ENCODE measurements at regions of chr2 and their contacts with region 1.

Region 1: GRCh38 chr2:136057023-136057801 is 60.7 kb downstream of the CXCR4 start:
- DNase-seq: peak; percentile 65
- H3K4me3 Mint-ChIP-seq: peak overlapping the region; percentile 43
- H3K27ac Mint-ChIP-seq: peak overlapping the region; percentile 90
- H3K4me1 Mint-ChIP-seq: peaks cover 87% of the 10 kb centered on the region
- H3K27me3 Mint-ChIP-seq: no peaks in the 10 kb centered on the region

Region 2: GRCh38 chr2:135800513-135801460 is 256.4 kb before region 1 on chr2:
- intact Hi-C with region 1: no loop called
- DNase-seq: no peak
- H3K4me3 Mint-ChIP-seq: no peak overlapping the region
- H3K27ac Mint-ChIP-seq: no peak overlapping the region
- H3K4me1 Mint-ChIP-seq: peaks cover 23% of the 10 kb centered on the region
- H3K27me3 Mint-ChIP-seq: no peaks in the 10 kb centered on the region

Region 3: DNA sequence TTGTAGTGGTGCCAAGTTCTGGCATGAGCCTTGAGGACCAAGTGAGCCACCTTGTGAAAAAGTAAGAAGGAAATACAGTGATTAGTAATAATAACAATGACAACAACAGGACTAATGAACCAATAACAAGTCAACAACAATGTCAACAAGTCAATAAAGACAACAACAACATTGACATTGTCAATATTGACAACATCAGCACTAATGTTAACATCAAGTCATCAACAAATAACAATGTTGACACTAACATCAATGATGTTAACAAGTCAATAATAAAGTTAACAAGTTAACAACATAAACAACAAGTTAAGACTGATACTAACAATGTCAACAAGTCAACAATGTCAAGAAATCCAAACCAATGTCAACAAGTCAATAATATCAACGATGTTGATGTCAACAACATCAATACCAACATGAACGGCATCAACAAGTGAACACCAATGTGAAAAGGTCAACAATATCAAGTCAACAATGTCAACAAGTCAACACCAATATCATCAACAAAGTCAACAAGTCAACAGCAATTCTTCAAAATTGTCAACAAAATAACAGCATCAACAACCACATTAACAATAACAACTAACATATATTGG is 244.2 kb before region 1 on chr2:
- intact Hi-C with region 1: loop called (anchors 2 kb)
- DNase-seq: no peak
- H3K4me3 Mint-ChIP-seq: no peak overlapping the region
- H3K27ac Mint-ChIP-seq: peak overlapping the region; percentile 13
- H3K4me1 Mint-ChIP-seq: peaks cover 20% of the 10 kb centered on the region
- H3K27me3 Mint-ChIP-seq: no peaks in the 10 kb centered on the region

Region 4: DNA sequence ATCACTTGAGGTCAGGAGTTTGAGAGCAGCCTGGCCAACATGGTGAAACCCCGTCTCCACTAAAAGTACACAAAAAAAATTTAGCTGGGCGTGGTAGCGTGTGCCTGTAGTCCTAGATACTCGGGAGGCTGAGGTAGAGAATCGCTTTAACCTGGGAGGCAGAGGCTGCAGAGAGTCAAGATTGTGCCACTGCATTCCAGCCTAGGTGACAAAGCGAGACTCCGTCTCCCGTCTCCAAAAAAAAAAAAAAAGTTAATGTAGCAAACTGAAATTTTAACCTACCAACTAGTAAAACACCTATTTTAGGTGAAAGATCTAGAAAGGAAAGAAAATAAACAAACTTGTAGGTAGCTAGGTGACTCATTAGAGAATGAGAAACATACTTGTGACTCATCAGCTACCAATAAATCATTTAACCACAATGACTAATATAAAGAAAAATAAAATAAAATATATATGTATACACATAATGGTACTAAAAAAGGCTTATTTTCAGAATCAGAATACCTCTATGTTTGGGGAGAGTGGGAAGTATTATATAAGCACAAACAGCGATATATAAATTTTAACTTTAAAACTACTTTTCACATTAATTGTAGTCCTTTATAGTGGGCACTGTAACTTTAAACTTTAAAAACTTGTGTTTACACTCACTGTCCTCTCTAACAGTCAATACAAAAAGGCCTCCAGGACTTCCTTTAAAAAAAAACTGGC is 108.4 kb before region 1 on chr2:
- intact Hi-C with region 1: loop called (anchors 1 kb)
- DNase-seq: no peak
- H3K4me3 Mint-ChIP-seq: peak overlapping the region; percentile 53
- H3K27ac Mint-ChIP-seq: peak overlapping the region; percentile 87
- H3K4me1 Mint-ChIP-seq: peaks cover 58% of the 10 kb centered on the region
- H3K27me3 Mint-ChIP-seq: no peaks in the 10 kb centered on the region

Region 5: DNA sequence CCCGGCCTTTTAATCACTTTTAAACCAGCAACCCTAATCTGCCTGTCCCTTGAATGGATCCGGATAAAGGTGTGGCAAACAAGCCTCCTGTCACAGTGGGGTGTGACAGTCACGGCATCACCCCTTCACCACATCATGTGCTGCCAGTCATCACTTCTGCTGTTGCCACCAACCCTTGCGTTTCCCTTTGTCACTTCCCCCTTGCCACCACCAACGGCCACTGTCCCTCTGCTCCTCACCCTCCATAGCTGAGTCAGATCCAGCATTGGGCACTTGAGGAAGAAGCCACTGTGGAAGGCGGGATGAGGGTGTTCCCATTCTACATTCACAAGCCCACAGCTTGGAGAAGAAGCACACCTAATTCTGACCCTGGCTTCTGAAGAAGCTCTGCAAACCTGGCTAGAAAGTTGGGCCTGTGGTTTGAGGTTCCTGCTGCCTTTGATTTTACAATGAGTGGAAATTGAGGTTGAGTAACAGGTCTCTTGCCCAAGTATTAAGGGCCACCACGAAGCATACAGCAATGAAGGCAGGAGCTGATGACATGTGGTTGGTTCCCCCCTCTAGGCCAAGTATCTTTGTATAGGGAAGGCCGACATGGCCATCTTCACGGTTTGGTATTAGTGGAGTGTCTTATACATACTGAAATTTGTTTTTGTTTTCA is 48.9 kb before region 1 on chr2:
- intact Hi-C with region 1: loop called (anchors 2 kb)
- DNase-seq: peak; percentile 45
- H3K4me3 Mint-ChIP-seq: peak overlapping the region; percentile 2
- H3K27ac Mint-ChIP-seq: peak overlapping the region; percentile 32
- H3K4me1 Mint-ChIP-seq: peaks cover 47% of the 10 kb centered on the region
- H3K27me3 Mint-ChIP-seq: no peaks in the 10 kb centered on the region

Region 6: GRCh38 chr2:136135921-136136906 is 79.0 kb after region 1 on chr2:
- intact Hi-C with region 1: loop called (anchors 1 kb)
- DNase-seq: peak; percentile 59
- H3K4me3 Mint-ChIP-seq: peak overlapping the region; percentile 17
- H3K27ac Mint-ChIP-seq: peak overlapping the region; percentile 60
- H3K4me1 Mint-ChIP-seq: peaks cover 82% of the 10 kb centered on the region
- H3K27me3 Mint-ChIP-seq: peaks cover 30% of the 10 kb centered on the region

Region 7: DNA sequence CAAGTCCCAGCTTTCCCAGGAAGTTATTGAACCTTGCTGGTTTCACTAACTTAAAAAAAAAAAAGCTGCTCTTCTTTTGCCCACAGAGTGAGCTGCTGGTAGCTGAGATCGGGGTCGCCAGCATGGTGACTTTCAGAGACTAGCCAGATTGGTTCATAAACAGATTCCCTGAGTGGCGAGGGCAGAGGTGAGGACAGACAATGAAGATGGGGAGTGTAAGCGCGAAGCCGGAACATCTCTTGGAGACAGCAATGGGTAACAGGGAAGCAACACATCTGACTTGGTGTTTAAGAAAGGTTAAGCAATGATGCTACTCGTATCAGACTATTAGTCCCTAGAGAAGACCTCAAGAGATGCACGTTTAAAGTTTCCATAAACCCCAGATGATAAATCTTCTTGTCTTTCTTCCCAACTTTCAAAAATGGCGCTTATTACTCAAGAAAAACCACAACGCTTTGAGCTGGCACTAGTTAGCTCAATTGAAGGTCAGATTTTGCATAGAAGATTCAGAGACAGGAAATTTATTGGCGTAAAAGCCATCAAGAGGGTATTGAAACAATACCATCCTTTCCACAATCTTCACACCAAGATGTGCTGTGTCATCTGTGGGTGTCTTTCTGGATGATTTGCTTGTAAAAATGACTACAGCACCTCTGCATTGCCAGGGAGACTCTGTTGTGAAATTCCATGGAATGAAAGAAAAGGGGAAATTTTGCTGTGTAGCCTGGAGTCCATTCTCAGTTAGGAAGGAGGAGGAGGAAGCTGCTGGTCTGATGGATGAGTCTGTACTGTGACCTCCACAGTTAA is 253.8 kb after region 1 on chr2:
- intact Hi-C with region 1: loop called (anchors 1 kb)
- DNase-seq: no peak
- H3K4me3 Mint-ChIP-seq: peak overlapping the region; percentile 38
- H3K27ac Mint-ChIP-seq: peak overlapping the region; percentile 83
- H3K4me1 Mint-ChIP-seq: peaks cover 38% of the 10 kb centered on the region
- H3K27me3 Mint-ChIP-seq: peaks cover 4% of the 10 kb centered on the region

Region 8: DNA sequence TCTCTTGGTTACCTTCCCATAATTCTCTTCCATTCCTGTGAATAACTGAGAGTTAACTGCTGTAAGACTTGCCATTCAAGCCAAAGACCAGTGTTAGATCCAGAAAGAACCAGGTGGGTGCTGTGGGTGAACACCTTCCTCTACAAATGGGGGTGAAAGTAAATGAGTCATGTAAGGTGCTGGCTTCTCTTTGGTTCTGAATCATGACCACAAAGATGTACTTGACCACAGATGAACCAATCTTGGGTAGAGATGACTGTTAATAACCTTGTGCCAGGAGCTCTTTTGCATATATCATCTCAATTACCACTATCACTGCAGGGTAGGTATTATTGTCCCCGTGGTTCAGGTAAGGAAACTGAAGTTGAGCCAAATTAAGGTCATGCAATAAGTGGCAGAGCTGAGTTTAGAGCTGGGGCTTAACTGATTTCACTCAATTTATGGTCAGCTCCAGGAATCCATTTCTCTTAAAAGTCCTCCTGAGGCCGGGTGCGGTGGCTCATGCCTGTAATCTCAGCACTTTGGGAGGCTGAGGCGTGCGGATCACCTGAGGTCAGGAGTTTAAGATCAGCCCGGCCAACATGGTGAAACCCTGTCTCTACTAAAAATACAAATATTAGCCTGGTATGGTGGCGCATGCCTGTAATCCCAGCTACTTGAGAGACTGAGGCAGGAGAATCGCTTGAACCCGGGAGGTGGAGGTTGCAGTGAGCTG is 305.6 kb after region 1 on chr2:
- intact Hi-C with region 1: loop called (anchors 1 kb)
- DNase-seq: no peak
- H3K4me3 Mint-ChIP-seq: peak overlapping the region; percentile 21
- H3K27ac Mint-ChIP-seq: peak overlapping the region; percentile 69
- H3K4me1 Mint-ChIP-seq: peaks cover 57% of the 10 kb centered on the region
- H3K27me3 Mint-ChIP-seq: peaks cover 4% of the 10 kb centered on the region

Measured in activated T-helper 1 cell treated with anti-CD3 and anti-CD28 coated beads, Interleukin-12 subunit alpha, Interleukin-12 subunit beta, Interleukin-2, Interleukin-4 antibody, amounts not matched to agents 30 ng/mL and 10 ng/mL and 1 ng/mL, durations not matched to agents 14 hours and 24 hours and 36 hours (primary cell).